PC-9 (cell line): ENCODE measurements at regions of chr16 and their contacts with region 1.

Region 1: DNA sequence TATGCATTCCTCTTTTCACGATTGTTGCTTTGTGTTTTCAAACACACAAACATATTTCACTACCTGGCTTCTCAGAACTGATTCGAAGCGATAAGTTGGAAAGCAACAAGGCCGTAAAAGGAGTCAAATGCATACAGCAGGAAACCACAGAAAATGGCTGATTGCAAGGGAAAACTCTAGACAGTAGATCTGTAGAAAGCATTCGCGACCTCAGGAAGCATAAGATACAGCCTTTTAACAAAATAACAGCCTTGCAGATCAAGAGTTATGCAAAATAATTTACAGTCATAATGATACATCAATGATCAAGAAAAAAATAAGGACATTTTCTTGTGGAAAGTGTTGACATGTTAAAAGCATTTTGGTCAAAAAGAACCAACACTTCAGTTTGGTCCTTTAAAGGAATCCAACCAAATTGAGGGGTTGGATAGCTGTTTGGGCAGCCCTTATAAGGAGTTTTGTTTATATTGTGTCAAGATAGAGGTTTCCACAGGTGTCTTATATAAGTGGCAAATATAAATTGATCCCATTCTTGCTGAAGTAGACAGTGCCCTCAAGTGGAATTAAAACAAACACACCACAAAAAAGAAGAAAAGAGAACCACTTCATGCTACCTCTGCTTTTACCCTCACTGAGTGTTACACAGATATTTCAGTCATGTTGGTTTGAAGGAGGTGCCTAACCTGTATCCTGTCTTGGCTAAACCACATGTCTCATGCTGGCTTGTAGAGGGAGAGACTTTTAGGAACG is 5.5 kb downstream of the CYLD start:
- DNase-seq: peak in 1 of 2 experiments; percentile 43
- H3K4me3 ChIP-seq: no peak overlapping the region
- H3K27ac ChIP-seq: no peak overlapping the region
- H3K4me1 ChIP-seq: peaks cover 24% of the 10 kb centered on the region
- H3K27me3 ChIP-seq: no peaks in the 10 kb centered on the region
- CTCF ChIP-seq: peak; percentile 68

Region 2: DNA sequence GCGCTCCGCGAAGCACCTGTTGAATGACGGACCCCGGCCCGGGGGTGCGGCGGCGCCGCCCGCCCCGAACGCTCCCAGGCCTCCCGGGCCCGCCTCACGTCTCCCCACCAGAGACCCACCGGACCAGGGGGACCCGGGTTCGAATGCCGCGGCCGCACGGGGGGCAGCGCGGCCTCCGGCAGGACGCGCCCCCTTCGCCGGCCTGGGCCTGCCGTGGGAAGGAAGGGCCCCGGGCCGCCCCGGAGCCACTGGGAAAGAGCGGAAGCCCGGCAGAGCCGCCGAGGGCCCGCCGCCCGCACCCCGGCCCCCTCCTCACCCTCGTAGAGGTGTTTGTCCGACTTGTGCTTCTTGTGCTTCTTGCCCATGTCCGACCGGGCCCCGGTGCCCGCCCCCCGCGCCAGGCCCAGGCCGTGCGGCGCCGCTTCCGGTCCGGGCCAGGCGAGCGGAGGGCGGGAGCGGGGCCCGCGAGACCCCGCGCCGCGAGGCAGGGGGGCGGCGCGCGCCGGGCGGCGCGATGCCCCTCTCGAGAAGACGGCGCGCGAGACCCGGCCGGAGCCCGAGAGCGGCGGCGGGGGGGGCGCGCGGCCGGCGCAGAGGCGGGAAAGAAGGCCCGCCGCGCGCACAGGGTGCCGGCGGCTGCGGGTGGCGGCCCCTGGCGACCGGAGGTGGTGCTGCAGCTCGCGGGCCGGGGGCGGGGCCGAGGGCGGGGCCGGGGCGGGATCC is 378.8 kb before region 1 on chr16 and contains the start of gene BRD7:
- CTCF ChIA-PET with region 1: no interaction called
- POLR2A ChIA-PET with region 1: no interaction called
- intact Hi-C with region 1: loop called (anchors 2 kb)
- DNase-seq: peak; percentile 26 to 62
- H3K4me3 ChIP-seq: peak within 1 kb of the TSS; percentile 71
- H3K27ac ChIP-seq: no peak within 1 kb of the TSS
- H3K4me1 ChIP-seq: peaks cover 18% of the 10 kb centered on the region
- H3K27me3 ChIP-seq: no peaks in the 10 kb centered on the region
- CTCF ChIP-seq: no peak
- total RNA-seq, gene BRD7: 72.1 and 76.6 TPM in 2 replicates

Region 3: GRCh38 chr16:50665128-50665878 is 82.1 kb before region 1 on chr16:
- CTCF ChIA-PET with region 1: interaction called, 14 read pairs
- POLR2A ChIA-PET with region 1: no interaction called
- intact Hi-C with region 1: loop called (anchors 1 kb)
- DNase-seq: peak; percentile 51 to 79
- H3K4me3 ChIP-seq: peak overlapping the region; percentile 45; the same call in 1 of the 2 replicates
- H3K27ac ChIP-seq: no peak overlapping the region
- H3K4me1 ChIP-seq: peaks cover 14% of the 10 kb centered on the region
- H3K27me3 ChIP-seq: no peaks in the 10 kb centered on the region
- CTCF ChIP-seq: peak; percentile 93